ENCODE measurements at regions of chr19 and their contacts with region 1.

Region 1: GRCh38 chr19:53365134-53365898 is at the start of gene ZNF525:
- DNase-seq: peak; percentile 94 to 97 (median 96)
- ATAC-seq: peak; percentile 100
- H3K4me3 ChIP-seq: peak within 1 kb of the TSS; percentile 96
- H3K4me3 Mint-ChIP-seq: peak within 1 kb of the TSS; percentile 94 to 98 (median 96)
- H3K27ac ChIP-seq: peak within 1 kb of the TSS; percentile 80
- H3K27ac Mint-ChIP-seq: peak within 1 kb of the TSS; percentile 91 to 98 (median 94)
- H3K4me1 ChIP-seq: no peaks in the 10 kb centered on the region
- H3K4me1 Mint-ChIP-seq: peaks cover 12 to 35% (median 31%) of the 10 kb centered on the region in 7 donors
- H3K27me3 ChIP-seq: no peaks in the 10 kb centered on the region
- H3K27me3 Mint-ChIP-seq: no peaks in the 10 kb centered on the region
- total RNA-seq, gene ZNF525: 11.5 to 33.7 (median 24.2) TPM

Region 2: GRCh38 chr19:52690369-52691214 is 674.7 kb before region 1 on chr19:
- CTCF ChIA-PET with region 1: no interaction called
- POLR2A ChIA-PET with region 1: no interaction called
- intact Hi-C with region 1: loop called in 1 of 2 experiments (anchors 1 kb)
- DNase-seq: peak; percentile 81 to 91 (median 87)
- ATAC-seq: peak; percentile 99
- H3K4me3 ChIP-seq: peak overlapping the region; percentile 80
- H3K4me3 Mint-ChIP-seq: peak overlapping the region; percentile 92 to 99 (median 96)
- H3K27ac ChIP-seq: peak overlapping the region; percentile 85
- H3K27ac Mint-ChIP-seq: peak overlapping the region; percentile 89 to 97 (median 94)
- H3K4me1 ChIP-seq: peaks cover 6 to 9% of the 10 kb centered on the region in 2 donors
- H3K4me1 Mint-ChIP-seq: peaks cover 18 to 33% (median 30%) of the 10 kb centered on the region in 7 donors
- H3K27me3 ChIP-seq: no peaks in the 10 kb centered on the region
- H3K27me3 Mint-ChIP-seq: no peaks in the 10 kb centered on the region

Region 3: DNA sequence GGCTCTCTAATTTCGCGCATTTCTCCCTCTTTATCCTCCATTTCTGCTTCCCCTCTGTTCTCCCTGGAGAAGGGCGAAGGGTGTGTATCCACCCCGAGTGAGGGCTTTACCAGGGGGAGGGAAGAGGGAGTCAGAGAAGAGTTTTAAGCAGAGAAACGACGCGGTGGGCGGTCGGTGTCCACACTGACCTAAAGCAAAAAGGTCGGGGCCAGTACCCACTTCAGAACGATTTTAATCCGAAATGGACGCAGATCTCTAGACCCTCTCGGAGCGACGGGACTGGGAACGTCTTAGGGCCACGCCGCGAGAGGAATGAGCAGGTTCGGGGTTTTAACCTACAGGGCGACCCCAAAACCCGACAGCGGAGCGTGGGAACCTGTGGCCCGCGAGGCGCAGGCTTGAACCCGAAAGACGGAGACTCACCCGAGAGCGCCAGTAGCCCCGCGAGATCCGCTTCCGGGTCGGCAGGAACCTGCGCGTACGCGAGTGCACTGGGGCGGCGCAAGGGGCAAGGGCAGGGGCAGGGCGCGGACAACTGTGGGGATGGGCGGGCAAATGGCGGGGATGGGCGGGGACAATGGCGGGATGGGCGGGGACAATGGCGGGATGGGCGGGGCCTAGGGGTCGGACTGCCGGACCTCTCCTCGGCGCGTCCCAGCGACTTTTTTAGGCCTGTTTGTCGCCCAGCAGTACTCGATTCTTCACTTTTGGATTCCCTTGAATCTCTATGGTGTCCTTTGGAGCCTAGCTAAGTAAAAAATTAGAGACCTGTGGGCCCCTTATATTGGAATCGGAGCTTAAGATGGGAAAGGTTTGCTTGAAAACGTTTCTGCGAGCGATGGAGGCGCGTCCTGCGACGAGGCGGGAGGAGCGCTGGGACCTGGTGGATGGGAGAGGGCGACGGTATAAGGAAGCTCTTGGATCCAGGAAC is 110.6 kb before region 1 on chr19 and contains the start of gene ZNF677:
- CTCF ChIA-PET with region 1: interaction called, 4 read pairs
- POLR2A ChIA-PET with region 1: no interaction called
- intact Hi-C with region 1: loop called in 1 of 2 experiments (anchors 1 kb)
- DNase-seq: peak; percentile 42 to 86 (median 77)
- ATAC-seq: peak; percentile 100
- H3K4me3 ChIP-seq: peak within 1 kb of the TSS; percentile 54
- H3K4me3 Mint-ChIP-seq: peak within 1 kb of the TSS; percentile 84 to 93 (median 89)
- H3K27ac ChIP-seq: peak within 1 kb of the TSS; percentile 66
- H3K27ac Mint-ChIP-seq: peak within 1 kb of the TSS in 8 of 9 donors; percentile 21 to 94 (median 78)
- H3K4me1 ChIP-seq: peaks cover 0 to 6% of the 10 kb centered on the region in 2 donors
- H3K4me1 Mint-ChIP-seq: peaks cover 0 to 17% (median 11%) of the 10 kb centered on the region in 7 donors
- H3K27me3 ChIP-seq: no peaks in the 10 kb centered on the region
- H3K27me3 Mint-ChIP-seq: peaks cover 0 to 13% (median 12%) of the 10 kb centered on the region in 5 donors
- total RNA-seq, gene ZNF677: 2.2 to 25.9 (median 7.4) TPM

Region 4: DNA sequence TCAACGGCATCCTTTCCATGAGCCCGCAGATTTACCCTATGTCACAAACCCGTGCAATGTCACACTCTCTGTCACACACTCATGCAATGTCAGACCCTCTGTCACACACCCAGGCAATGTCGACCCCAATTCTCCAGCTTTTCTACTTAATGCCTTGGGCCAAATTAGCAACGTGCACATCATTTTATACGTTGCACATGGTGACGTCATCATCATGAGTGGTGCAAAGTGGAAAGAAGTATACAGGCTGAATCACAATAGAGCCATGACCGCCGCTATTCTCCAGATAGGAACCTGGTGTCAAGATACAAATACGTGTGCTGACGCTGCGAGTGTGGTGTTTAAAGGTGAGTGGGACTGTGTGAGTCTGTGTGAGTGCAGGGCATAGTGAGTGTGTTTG is 53.4 kb before region 1 on chr19:
- CTCF ChIA-PET with region 1: no interaction called
- POLR2A ChIA-PET with region 1: no interaction called
- intact Hi-C with region 1: no loop called
- DNase-seq: no peak
- ATAC-seq: no peak
- H3K4me3 ChIP-seq: no peak overlapping the region
- H3K4me3 Mint-ChIP-seq: no peak overlapping the region
- H3K27ac ChIP-seq: no peak overlapping the region
- H3K27ac Mint-ChIP-seq: no peak overlapping the region
- H3K4me1 ChIP-seq: no peaks in the 10 kb centered on the region
- H3K4me1 Mint-ChIP-seq: no peaks in the 10 kb centered on the region
- H3K27me3 ChIP-seq: no peaks in the 10 kb centered on the region
- H3K27me3 Mint-ChIP-seq: peaks cover 0 to 50% (median 37%) of the 10 kb centered on the region in 5 donors

Region 5: DNA sequence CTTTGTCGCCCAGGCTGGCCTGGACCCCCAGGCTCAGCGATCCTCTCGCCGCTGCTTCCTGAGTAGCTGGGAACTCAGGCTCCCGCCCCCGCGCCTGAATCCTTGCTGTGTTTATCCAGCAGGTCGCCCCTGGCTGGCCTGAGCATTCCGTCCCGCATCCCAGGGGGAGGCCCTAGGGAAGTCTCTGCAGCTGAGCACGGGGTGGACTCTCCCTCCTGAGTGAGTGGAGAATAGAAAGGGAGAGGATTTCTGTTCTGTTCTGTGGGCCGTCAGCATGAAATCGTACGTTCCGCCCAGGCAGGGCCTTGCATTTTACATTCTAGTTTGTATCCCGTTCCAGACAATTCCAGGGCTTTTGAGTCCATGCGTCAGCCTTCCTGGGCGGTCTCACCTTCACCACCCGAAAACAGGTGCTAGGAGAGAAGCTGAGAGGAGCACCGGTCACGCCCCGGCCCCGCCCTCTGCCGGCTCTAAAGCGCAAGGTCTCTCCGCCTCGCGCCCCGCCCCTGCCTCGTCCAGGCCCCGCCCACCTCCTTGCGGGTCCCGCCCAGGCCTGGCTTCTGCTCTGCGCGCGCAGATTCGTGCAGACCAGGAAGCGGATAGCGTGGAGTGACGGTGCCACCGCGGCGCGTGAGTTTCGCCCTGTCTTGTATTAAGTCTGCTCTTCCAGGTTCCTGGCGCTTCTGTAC is 66.2 kb after region 1 on chr19 and contains the start of gene ZNF761:
- CTCF ChIA-PET with region 1: no interaction called
- POLR2A ChIA-PET with region 1: no interaction called
- intact Hi-C with region 1: loop called (anchors 1 to 2 kb)
- DNase-seq: peak; percentile 94 to 99 (median 98)
- ATAC-seq: peak; percentile 100
- H3K4me3 ChIP-seq: peak within 1 kb of the TSS; percentile 91
- H3K4me3 Mint-ChIP-seq: peak within 1 kb of the TSS; percentile 94 to 99 (median 97)
- H3K27ac ChIP-seq: peak within 1 kb of the TSS; percentile 79
- H3K27ac Mint-ChIP-seq: peak within 1 kb of the TSS; percentile 90 to 99 (median 96)
- H3K4me1 ChIP-seq: peaks cover 6 to 16% of the 10 kb centered on the region in 2 donors
- H3K4me1 Mint-ChIP-seq: peaks cover 20 to 55% (median 35%) of the 10 kb centered on the region in 7 donors
- H3K27me3 ChIP-seq: no peaks in the 10 kb centered on the region
- H3K27me3 Mint-ChIP-seq: no peaks in the 10 kb centered on the region
- total RNA-seq, gene ZNF761: 8.0 to 18.8 (median 13.1) TPM

Region 6: DNA sequence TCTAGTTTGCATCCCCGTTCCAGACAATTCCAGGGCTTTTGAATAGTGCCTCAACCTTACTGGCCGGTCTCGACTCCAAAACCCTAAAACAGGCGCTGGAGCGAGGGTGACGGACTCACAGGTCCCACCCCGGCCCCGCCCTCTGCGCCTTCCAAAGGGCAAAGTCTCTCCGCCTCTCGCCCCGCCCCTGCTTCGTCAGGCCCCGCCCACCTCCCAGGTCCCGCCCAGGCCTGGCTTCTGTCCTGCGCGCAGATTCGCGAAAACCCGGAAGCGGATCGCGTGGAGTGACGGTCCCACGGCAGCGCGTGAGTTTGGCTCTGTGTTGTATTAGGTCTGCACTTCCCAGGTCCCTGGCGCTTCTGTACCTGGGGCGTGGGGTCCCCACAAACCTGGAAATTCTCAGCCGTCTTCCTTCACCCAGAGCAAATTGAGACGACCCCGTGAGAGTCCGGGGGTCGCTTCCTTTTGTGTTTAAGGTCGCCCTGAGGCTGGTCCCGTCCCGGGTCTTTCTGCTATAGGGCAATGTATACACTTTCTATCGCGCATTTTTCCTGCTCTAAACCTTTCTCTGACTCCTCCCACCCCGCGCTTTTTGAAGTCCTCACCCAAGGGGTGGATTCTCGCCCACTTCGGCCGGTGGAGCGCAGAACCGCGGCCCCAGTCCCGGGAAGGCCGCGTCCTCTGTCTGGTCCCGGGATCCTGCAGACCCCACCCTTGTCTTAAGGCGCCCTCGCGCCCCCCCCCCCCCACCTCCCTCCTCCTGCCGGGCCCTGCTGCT is 102.4 kb after region 1 on chr19 and contains the start of gene ZNF813:
- CTCF ChIA-PET with region 1: no interaction called
- POLR2A ChIA-PET with region 1: no interaction called
- intact Hi-C with region 1: loop called (anchors 1 kb)
- DNase-seq: peak; percentile 81 to 95 (median 92)
- ATAC-seq: peak; percentile 100
- H3K4me3 ChIP-seq: peak within 1 kb of the TSS; percentile 74
- H3K4me3 Mint-ChIP-seq: peak within 1 kb of the TSS; percentile 88 to 96 (median 94)
- H3K27ac ChIP-seq: peak within 1 kb of the TSS; percentile 73
- H3K27ac Mint-ChIP-seq: peak within 1 kb of the TSS; percentile 76 to 96 (median 90)
- H3K4me1 ChIP-seq: no peaks in the 10 kb centered on the region
- H3K4me1 Mint-ChIP-seq: peaks cover 20 to 45% (median 31%) of the 10 kb centered on the region in 7 donors
- H3K27me3 ChIP-seq: no peaks in the 10 kb centered on the region
- H3K27me3 Mint-ChIP-seq: peaks cover 0 to 24% (median 12%) of the 10 kb centered on the region in 5 donors
- total RNA-seq, gene ZNF813: 2.5 to 11.2 (median 4.6) TPM